Heart left ventricle (tissue), 16 donors: ENCODE measurements at regions of chr1 and their contacts with region 1.

Region 1: DNA sequence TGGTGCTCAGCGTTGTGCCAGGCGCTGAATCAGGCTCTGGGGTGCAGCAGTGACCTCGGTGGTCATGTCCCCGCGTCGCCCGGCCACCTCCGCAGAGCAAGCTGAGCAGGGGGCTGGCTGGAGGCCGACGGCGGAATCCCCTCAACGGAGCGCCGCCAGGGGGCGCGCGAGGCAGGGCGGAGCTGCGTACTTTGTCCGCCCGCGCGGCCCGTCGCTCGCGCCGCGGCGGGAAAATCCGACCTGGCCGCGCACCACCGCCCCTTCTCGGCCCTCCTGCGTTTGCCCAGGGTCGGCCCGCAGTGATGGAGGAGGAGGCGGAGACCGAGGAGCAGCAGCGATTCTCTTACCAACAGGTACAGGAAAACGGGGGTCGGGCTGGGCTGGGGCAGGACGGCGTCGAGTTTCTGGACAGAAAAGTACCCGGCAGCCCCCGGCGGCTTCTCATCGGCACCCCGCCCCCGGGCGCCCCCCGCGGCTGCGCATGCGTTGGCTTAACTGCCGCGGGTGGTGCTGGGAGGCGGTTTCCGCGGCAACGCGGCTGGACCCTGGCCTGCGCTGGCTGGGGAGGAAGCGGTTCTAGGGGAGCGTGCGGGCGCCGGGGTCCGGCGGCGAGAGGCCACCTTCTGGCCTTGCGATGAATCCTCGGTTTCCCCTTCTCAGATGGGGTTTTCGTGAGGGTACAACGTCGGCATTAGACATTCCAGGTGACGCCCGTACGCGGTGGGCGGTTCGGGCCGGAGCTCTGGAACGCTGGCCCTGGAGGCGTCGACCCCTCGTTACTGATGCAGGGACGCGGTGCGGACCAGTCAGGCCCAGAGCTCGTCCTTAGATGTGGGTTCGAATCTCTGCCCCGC is at the start of gene CENPS:
- DNase-seq: peak; percentile 91 to 96 (median 95)
- ATAC-seq: peak; percentile 87 to 98 (median 97)
- H3K4me3 ChIP-seq: peak within 1 kb of the TSS; percentile 61 to 93 (median 82)
- H3K27ac ChIP-seq: peak within 1 kb of the TSS in 11 of 12 donors; percentile 8 to 82 (median 69)
- H3K4me1 ChIP-seq: peaks cover 0 to 26% (median 12%) of the 10 kb centered on the region in 12 donors
- H3K27me3 ChIP-seq: no peaks in the 10 kb centered on the region
- CTCF ChIP-seq: peak; percentile 94 to 99 (median 97)
- POLR2A ChIP-seq: peak in 1 of 2 donors; percentile 31
- total RNA-seq, gene CENPS: 2.4 to 11.6 (median 8.5) TPM

Region 2: DNA sequence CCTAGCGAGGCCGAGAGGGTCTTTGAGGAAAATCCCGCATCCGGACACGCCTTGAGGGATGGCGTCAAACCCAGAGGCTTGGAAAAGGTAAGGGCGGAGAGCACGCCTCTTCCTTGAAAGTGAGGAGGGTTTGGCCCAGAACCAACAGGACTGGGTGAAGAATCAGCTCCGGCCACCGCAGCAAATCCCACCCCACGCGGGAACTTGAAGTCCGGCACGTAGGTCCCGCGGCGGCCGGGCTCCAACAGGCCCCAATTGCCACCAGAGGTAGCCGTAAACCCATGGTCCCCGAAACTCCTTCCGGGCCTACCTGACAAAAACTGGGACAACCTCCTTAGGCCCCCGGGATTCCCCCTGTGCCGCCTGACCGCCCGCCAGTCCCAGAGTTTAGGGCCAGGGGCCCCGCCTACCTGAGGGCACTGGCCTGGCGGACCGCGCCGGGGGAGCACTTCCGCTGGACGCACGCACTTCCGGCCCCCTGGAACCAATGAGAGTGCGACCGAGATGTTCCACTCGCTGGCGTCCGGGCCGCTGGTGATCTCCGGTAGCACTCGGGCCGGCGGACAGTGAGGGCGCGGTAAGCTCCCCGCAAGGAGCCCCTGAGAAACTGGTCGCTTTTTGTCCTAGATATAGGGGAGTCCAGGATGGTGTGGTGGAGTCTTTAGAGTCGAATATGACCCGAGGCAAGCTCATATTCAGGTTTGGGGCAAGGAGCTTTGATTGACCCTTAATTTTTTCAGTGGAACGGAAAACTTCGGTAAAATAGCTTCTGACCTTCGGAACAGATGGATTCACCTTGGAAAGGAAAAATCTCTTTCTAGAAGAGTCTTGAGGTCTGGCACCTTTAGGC is 487.3 kb before region 1 on chr1 and contains the starts of genes LZIC and NMNAT1:
- intact Hi-C with region 1: loop called in 1 of 10 experiments (anchors 10 kb)
- DNase-seq: peak; percentile 93 to 96 (median 94)
- ATAC-seq: peak; percentile 99 to 100 (median 99)
- H3K4me3 ChIP-seq: peak within 1 kb of the TSS; percentile 66 to 96 (median 80)
- H3K27ac ChIP-seq: peak within 1 kb of the TSS; percentile 56 to 94 (median 90)
- H3K4me1 ChIP-seq: peaks cover 4 to 30% (median 17%) of the 10 kb centered on the region in 12 donors
- H3K27me3 ChIP-seq: no peaks in the 10 kb centered on the region
- CTCF ChIP-seq: peak in 2 of 12 donors; percentile 3 to 8
- POLR2A ChIP-seq: peak; percentile 17 to 92
- total RNA-seq, gene LZIC: 30.8 to 37.7 (median 34.9) TPM
- total RNA-seq, gene NMNAT1: 11.0 to 24.2 (median 17.2) TPM

Region 3: DNA sequence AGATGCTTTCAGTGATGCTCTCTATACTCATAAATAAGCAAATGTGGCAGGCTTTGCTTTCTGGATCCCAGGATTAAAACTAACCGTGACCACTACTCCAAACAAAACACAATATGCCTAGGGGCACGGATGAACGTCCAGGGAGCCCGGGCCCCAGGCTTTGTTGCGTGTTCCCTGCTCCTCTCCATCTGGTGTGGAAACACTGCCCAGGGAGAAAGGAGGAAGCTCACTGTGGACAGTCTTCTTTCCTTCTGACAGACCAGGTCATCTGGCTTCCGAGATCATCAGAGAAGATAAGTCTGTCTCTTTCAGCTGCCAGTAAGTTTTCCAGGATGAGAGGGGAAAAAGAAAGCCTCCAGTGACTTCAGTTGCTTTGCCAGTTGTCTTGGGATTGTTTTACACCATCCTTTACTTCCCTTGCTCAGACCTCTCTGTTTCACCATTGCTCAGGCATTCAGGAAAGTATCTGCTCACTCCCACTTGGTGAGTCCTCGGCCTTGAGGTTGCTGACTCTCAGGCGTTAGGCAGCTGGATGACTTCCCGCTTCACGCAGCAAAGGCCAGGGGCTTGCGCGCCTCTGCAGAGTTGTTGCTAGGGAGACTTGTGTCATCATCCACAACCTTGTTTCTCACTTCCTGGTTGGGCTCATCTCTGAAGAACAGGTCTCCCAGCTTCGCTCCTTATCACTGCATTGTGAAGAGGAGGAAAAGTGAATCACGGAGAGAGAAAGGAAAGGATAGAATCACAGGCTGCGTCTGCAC is 52.2 kb before region 1 on chr1:
- intact Hi-C with region 1: loop called (anchors 1 to 5 kb)
- DNase-seq: peak in 4 of 5 donors; percentile 31 to 64 (median 54)
- ATAC-seq: peak in 3 of 4 donors; percentile 35 to 57 (median 52)
- H3K4me3 ChIP-seq: no peak overlapping the region
- H3K27ac ChIP-seq: peak overlapping the region in 9 of 12 donors; percentile 17 to 78 (median 44)
- H3K4me1 ChIP-seq: peaks cover 0 to 16% (median 5%) of the 10 kb centered on the region in 12 donors
- H3K27me3 ChIP-seq: no peaks in the 10 kb centered on the region
- CTCF ChIP-seq: no peak
- POLR2A ChIP-seq: no peak

Region 4: GRCh38 chr1:10451287-10451686 is 20.8 kb after region 1 on chr1:
- intact Hi-C with region 1: no loop called
- DNase-seq: no peak
- ATAC-seq: peak in 2 of 4 donors; percentile 38 to 60
- H3K4me3 ChIP-seq: peak overlapping the region in 2 of 12 donors; percentile 0 to 22
- H3K27ac ChIP-seq: peak overlapping the region in 1 of 12 donors; percentile 10
- H3K4me1 ChIP-seq: peaks cover 0 to 11% (median 3%) of the 10 kb centered on the region in 12 donors
- H3K27me3 ChIP-seq: no peaks in the 10 kb centered on the region
- CTCF ChIP-seq: no peak
- POLR2A ChIP-seq: no peak

Region 5: DNA sequence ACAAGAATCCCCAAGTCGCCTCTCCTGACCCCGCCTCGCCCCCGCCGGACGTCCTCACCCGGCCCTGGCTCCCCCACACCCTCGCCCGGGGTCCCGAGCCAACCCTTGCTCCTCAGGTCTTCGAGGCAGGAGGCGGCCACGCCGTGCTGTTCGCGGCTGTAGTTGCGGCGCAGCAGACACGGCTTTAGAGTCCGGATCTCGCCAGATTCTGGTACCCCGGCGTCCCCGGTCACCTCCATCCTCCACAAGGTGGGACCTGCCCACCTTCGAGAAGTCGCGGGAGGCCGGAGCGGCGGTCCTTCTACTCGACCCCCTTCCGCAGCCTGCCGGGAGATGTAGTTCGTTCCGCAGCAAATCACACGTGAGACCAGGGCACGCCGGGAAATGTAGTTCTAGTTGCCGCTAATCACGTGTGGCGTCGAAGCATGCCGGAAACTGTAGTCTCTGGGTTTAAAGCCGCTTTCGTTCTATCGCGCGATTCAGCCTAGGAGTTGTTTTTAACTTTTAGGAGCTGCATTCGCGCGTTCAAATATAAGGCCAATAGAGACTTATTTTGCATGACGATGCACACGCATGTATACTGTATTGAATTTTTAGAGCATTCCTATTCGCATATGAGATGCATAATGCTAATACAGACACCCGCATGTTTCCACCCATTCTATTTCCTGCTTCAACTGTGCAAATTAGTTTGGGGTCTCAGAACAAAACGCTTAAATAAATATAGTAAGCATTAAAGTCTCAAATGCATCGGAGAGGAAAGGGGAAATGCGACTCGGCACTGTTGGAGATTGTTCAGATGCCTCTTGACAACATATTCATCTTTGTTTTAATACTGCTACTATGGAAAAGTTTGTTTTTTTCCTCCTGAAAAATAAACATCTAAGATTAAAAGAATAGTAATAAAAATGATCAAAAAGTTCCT is 42.0 kb after region 1 on chr1 and contains the start of gene DFFA:
- intact Hi-C with region 1: loop called in 6 of 10 experiments (anchors 2 to 5 kb)
- DNase-seq: peak; percentile 93 to 96 (median 94)
- ATAC-seq: peak; percentile 82 to 91 (median 90)
- H3K4me3 ChIP-seq: peak within 1 kb of the TSS; percentile 63 to 93 (median 81)
- H3K27ac ChIP-seq: peak within 1 kb of the TSS in 11 of 12 donors; percentile 13 to 85 (median 70)
- H3K4me1 ChIP-seq: peaks cover 0 to 50% (median 23%) of the 10 kb centered on the region in 12 donors
- H3K27me3 ChIP-seq: no peaks in the 10 kb centered on the region
- CTCF ChIP-seq: no peak
- POLR2A ChIP-seq: peak in 1 of 2 donors; percentile 68
- total RNA-seq, gene DFFA: 16.0 to 27.6 (median 24.5) TPM

Region 6: DNA sequence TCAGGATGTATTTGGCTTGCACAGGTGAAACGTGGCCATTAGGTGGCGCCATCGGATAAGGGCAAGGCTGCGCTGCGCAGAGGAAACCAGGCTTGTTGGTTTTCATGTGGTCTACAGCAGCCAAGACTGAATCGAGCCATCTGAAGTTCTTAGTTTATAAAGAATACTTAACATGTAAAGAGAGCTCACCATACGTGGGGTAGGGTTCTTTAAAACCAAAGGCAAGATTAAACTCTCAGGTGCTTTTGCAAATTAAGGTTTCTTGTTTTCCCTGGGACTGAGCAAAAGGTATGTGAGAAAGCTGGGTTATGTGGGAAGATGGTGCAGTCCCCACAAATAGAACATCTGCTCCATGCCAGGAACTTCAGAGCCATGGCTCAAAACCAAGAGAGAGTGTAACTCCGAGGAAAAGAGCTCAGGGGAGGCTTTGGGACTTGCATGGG is 607.3 kb after region 1 on chr1:
- intact Hi-C with region 1: no loop called
- DNase-seq: peak; percentile 80 to 92 (median 86)
- ATAC-seq: peak; percentile 88 to 97 (median 94)
- H3K4me3 ChIP-seq: peak overlapping the region in 1 of 12 donors; percentile 27
- H3K27ac ChIP-seq: no peak overlapping the region
- H3K4me1 ChIP-seq: peaks cover 0 to 9% (median 6%) of the 10 kb centered on the region in 12 donors
- H3K27me3 ChIP-seq: no peaks in the 10 kb centered on the region
- CTCF ChIP-seq: peak; percentile 87 to 99 (median 97)
- POLR2A ChIP-seq: no peak

Region 7: GRCh38 chr1:11339346-11340232 is 909.1 kb after region 1 on chr1:
- intact Hi-C with region 1: no loop called
- DNase-seq: no peak
- ATAC-seq: no peak
- H3K4me3 ChIP-seq: no peak overlapping the region
- H3K27ac ChIP-seq: no peak overlapping the region
- H3K4me1 ChIP-seq: no peaks in the 10 kb centered on the region
- H3K27me3 ChIP-seq: peaks cover 0 to 79% (median 30%) of the 10 kb centered on the region in 9 donors
- CTCF ChIP-seq: no peak
- POLR2A ChIP-seq: no peak